ENCODE measurements at regions of chr3 and their contacts with region 1.

Region 1: GRCh38 chr3:185667574-185667973 is 81.5 kb downstream of the SENP2 start:
- DNase-seq: no peak
- H3K4me3 ChIP-seq: no peak overlapping the region
- CTCF ChIP-seq: no peak
- POLR2A ChIP-seq: no peak

Region 2: GRCh38 chr3:185381320-185382058 is 286.1 kb before region 1 on chr3:
- intact Hi-C with region 1: no loop called
- DNase-seq: no peak
- H3K4me3 ChIP-seq: no peak overlapping the region
- CTCF ChIP-seq: no peak
- POLR2A ChIP-seq: no peak

Region 3: DNA sequence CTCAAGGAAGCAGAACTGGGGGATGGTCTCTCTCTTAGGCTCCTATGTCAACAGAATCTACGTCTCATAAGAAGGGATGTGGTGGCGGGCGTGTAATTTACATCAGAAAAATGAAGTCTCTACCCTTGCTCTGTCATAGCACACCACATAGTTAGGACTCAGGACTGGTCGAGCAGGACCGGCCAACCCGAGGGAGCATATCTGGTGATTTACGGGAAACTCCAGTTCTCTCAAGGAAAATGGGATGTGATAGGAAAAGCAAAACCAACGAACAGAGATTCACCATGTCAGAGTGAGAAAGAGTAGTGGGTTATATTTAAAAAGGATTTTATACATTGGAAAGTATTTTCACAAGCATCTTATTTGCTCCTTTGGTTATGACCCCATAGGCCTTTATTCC is 102.5 kb after region 1 on chr3:
- intact Hi-C with region 1: loop called (anchors 5 kb)
- DNase-seq: no peak
- H3K4me3 ChIP-seq: no peak overlapping the region
- CTCF ChIP-seq: no peak
- POLR2A ChIP-seq: no peak

Measured in lower leg skin (tissue), 4 donors.